CD4-positive, alpha-beta memory T cell (primary cell): ENCODE measurements at regions of chr2 and their contacts with region 1.

Region 1: DNA sequence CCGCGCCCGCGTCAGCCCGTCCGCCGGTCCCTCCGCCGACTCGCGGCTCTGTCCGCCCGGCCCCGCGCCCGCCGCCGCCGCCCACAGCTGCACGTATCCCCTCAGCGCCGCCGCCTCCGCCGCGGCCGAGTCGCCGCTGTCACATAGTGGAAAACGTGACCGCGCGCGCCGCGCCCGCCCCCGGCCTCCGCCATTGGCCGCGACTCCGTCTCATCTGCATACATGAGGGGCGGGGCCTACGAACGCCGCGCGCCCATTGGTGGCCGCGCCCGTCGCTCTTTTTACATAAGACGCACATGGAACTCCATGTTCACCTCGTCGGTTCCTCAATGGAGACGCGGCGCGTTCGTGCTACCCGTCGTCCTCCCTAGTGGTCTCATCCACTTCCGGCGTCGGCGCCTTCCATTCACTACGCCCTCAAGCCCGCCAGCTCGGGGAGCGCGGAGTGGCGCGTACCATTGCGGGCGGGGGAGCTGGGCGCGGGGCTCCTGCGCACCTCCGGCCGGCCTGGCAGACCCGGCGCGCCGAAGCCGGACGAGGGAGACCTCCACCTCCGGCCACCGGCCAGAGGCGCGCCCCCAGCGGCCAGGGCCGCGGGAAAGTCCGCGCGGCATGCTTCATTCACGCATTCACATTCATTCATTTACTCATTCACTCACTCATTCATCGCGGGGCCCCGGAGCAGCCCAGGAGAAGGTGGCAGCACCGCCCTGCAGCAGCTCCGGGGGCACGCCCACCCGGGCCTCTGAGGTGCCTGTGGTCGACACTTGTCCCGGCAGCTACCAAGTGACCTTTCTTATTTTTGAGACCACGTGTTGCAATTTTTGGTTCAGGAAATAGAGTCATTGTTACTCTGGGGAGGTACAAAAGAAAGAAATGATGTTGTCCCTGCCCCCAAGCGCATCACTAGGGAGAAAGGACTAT is 502 bp upstream of the PER2 start:
- DNase-seq: peak; percentile 97 to 99 (median 98)
- H3K4me3 ChIP-seq: peak overlapping the region; percentile 45 to 80
- H3K4me3 Mint-ChIP-seq: peak overlapping the region; percentile 83 to 95 (median 92)
- H3K27ac ChIP-seq: peak overlapping the region; percentile 72
- H3K27ac Mint-ChIP-seq: peak overlapping the region; percentile 92 to 98 (median 97)
- H3K4me1 ChIP-seq: peaks cover 35% of the 10 kb centered on the region
- H3K4me1 Mint-ChIP-seq: peaks cover 17 to 52% (median 36%) of the 10 kb centered on the region in 4 donors
- H3K27me3 ChIP-seq: no peaks in the 10 kb centered on the region
- H3K27me3 Mint-ChIP-seq: no peaks in the 10 kb centered on the region

Region 2: DNA sequence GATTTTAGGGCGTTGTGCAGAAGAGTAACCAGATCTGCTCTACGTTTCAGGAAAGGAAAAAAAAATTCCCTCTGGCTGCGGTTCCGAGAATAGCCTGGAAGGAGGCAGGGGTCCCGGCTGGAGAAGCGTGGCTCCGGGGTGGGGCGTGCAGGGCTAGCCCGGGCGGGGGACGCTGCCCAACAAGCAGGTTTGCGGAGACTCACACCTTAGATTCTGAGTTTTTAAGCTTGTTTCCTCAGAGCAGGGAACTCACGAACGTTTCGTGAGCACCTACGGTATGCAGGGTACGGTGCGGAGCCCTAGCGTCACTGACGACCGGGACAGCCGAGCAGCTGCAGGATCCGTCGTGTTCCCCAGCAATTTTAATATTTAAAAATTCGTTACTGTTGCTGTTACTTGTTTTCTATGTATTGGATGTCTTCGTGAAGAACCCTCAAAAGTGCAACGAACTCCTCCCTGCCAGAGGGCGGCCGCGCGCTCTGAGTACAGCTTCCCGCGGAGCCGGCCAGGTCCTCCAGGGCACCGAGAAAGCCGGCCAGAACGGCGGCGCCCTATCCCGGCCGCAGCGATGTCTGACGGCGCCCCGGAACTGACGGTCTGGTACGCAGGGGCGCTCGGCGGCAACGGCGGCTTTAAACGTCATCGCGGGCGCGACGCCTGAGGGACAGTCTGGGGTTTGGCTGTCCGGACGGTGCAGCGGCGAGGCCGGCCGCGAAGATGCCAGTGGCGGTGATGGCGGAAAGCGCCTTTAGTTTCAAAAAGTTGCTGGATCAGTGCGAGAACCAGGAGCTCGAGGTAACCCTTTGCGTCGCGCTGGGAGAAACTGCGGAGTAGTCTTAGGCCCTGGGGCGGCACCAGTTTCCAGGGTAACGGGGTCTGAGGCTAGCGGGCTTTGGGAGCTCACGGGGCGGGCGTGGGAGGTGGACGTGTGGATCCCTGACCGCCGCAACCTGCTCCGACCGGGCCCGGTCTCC is 1203.4 kb before region 1 on chr2 and contains the start of gene COPS8:
- CTCF ChIA-PET with region 1: no interaction called
- POLR2A ChIA-PET with region 1: no interaction called
- intact Hi-C with region 1: loop called (anchors 2 kb)
- DNase-seq: peak; percentile 88 to 91 (median 91)
- H3K4me3 ChIP-seq: peak within 1 kb of the TSS; percentile 48 to 79
- H3K4me3 Mint-ChIP-seq: peak within 1 kb of the TSS; percentile 99 to 100 (median 99)
- H3K27ac ChIP-seq: peak within 1 kb of the TSS; percentile 81
- H3K27ac Mint-ChIP-seq: peak within 1 kb of the TSS; percentile 97 to 100 (median 100)
- H3K4me1 ChIP-seq: peaks cover 16% of the 10 kb centered on the region
- H3K4me1 Mint-ChIP-seq: peaks cover 9 to 30% (median 16%) of the 10 kb centered on the region in 4 donors
- H3K27me3 ChIP-seq: no peaks in the 10 kb centered on the region
- H3K27me3 Mint-ChIP-seq: peaks cover 0 to 1% of the 10 kb centered on the region in 2 donors
- total RNA-seq, gene COPS8: 33.4 to 34.5 TPM

Region 3: DNA sequence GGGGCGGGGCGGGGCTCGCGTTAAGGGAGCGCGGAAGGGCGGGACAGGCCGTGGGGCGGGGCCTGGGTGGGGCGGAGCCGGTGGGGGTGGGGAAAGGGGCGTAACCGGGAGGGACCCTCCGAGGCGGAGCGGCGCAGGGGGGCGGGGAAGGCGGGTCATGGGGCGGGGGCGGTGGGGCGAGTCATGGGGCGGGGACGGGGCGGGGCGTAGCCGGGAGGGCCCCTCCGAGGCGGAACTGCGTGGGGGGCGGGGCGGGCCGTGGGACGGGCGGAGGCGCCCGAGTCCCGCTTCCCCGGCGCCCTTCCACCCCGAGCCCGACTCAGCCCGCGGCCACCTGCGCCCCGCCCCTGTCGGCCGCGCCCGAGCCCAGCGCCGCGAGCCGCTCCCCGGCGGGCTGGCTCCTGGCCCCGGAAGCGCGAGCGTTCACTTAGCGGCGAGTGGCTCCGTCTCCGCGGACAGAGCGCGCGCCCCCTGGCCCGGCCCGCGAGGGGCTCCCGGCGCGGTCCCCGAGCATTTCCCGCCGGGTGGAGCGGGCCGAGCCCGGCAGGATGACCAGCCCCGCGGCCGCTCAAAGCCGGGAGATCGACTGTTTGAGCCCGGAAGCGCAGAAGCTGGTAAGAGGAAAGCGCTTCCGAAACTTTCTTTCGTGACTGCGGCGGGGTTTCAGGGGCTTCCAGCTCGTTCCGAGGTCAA is 596.9 kb before region 1 on chr2:
- CTCF ChIA-PET with region 1: no interaction called
- POLR2A ChIA-PET with region 1: no interaction called
- intact Hi-C with region 1: loop called (anchors 5 kb)
- DNase-seq: peak; percentile 91 to 94 (median 93)
- H3K4me3 ChIP-seq: peak overlapping the region; percentile 79 to 89
- H3K4me3 Mint-ChIP-seq: peak overlapping the region; percentile 90 to 97 (median 93)
- H3K27ac ChIP-seq: peak overlapping the region; percentile 96
- H3K27ac Mint-ChIP-seq: peak overlapping the region; percentile 93 to 99 (median 97)
- H3K4me1 ChIP-seq: peaks cover 76% of the 10 kb centered on the region
- H3K4me1 Mint-ChIP-seq: peaks cover 55 to 82% (median 69%) of the 10 kb centered on the region in 4 donors
- H3K27me3 ChIP-seq: no peaks in the 10 kb centered on the region
- H3K27me3 Mint-ChIP-seq: no peaks in the 10 kb centered on the region

Region 4: DNA sequence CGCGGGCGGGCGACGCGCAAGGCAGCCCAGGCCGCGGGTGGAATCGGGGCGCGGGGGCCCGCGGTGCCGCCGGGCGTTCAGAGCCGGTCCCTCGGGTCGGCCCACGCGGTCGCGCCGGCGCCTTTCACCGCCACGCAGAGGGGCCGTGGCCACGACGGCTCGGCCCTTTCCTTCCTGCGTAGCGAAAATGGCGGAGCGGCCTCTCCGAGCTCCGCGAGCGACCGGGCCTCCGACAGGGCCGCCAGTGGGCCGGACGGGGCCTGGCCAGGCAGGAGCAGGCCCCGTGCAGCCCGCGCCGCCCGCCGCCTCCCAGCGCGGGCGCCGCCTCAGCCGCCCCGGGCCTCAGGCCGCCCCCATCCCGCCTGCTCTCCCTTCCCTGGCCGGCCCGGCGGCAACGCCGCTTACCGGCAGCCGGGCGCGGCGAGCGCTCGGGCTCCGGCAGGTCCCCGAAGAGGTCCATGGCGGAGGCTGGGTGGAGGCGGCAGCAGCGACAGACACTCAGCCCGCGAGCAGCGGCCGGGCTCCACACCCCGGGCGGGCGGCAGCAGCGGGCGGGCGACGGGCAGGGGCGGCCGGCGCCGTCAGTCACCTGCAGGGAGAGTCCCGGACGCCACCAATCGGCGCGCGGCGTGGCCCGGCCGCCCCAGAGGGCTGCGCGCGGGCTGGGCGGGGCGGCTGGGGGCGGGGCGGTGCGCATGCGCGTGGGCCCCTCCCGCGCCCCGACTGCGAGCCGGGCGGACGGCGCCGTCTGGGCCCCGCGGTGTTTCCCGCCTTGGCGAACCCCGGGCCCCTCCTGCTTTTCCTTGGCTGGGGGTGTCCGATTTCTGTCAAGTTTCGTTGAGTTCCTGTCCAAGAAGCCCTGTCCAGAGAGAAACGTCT is 85.6 kb before region 1 on chr2 and contains the start of gene ILKAP:
- CTCF ChIA-PET with region 1: no interaction called
- POLR2A ChIA-PET with region 1: interaction called, 6 read pairs
- intact Hi-C with region 1: loop called (anchors 1 kb)
- DNase-seq: peak; percentile 88 to 93 (median 91)
- H3K4me3 ChIP-seq: peak within 1 kb of the TSS; percentile 30 to 72
- H3K4me3 Mint-ChIP-seq: peak within 1 kb of the TSS; percentile 87 to 94 (median 91)
- H3K27ac ChIP-seq: peak within 1 kb of the TSS; percentile 79
- H3K27ac Mint-ChIP-seq: peak within 1 kb of the TSS; percentile 89 to 97 (median 94)
- H3K4me1 ChIP-seq: peaks cover 48% of the 10 kb centered on the region
- H3K4me1 Mint-ChIP-seq: peaks cover 28 to 46% (median 36%) of the 10 kb centered on the region in 4 donors
- H3K27me3 ChIP-seq: no peaks in the 10 kb centered on the region
- H3K27me3 Mint-ChIP-seq: no peaks in the 10 kb centered on the region
- total RNA-seq, gene ILKAP: 78.2 to 87.8 TPM

Region 5: GRCh38 chr2:238239872-238240751 is 48.8 kb before region 1 on chr2 and contains the start of gene HES6:
- CTCF ChIA-PET with region 1: no interaction called
- POLR2A ChIA-PET with region 1: no interaction called
- intact Hi-C with region 1: loop called (anchors 2 kb)
- DNase-seq: peak; percentile 68 to 80 (median 74)
- H3K4me3 ChIP-seq: peak within 1 kb of the TSS in 1 of 2 donors; percentile 52
- H3K4me3 Mint-ChIP-seq: peak within 1 kb of the TSS; percentile 87 to 98 (median 91)
- H3K27ac ChIP-seq: no peak within 1 kb of the TSS
- H3K27ac Mint-ChIP-seq: peak within 1 kb of the TSS in 6 of 7 donors; percentile 25 to 91 (median 90)
- H3K4me1 ChIP-seq: peaks cover 12% of the 10 kb centered on the region
- H3K4me1 Mint-ChIP-seq: peaks cover 1 to 32% (median 4%) of the 10 kb centered on the region in 4 donors
- H3K27me3 ChIP-seq: peaks cover 8% of the 10 kb centered on the region
- H3K27me3 Mint-ChIP-seq: peaks cover 14 to 15% of the 10 kb centered on the region in 2 donors
- total RNA-seq, gene HES6: 0.67 to 2.1 TPM

Region 6: DNA sequence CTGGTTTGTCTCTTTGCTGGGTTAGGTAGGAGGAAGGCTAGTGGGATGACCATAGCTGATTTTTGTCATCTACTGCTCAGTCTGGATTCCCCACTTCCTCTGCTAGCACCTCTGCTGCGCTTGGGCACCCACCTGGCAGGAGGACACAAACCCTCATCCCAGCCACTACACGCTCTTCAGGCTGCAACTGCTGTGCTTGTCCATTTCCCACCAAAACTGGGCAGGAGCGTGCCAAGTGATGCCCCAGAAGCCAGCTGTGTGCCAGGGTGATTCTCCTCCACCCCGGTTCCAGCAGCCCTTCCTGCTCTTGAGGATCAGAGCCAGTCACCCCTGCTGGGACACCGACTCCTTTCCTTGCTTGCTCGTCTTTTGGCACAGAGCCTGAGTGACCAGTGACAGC is 15.2 kb after region 1 on chr2:
- CTCF ChIA-PET with region 1: no interaction called
- POLR2A ChIA-PET with region 1: no interaction called
- intact Hi-C with region 1: no loop called
- DNase-seq: no peak
- H3K4me3 ChIP-seq: no peak overlapping the region
- H3K4me3 Mint-ChIP-seq: no peak overlapping the region
- H3K27ac ChIP-seq: no peak overlapping the region
- H3K27ac Mint-ChIP-seq: no peak overlapping the region
- H3K4me1 ChIP-seq: no peaks in the 10 kb centered on the region
- H3K4me1 Mint-ChIP-seq: no peaks in the 10 kb centered on the region
- H3K27me3 ChIP-seq: no peaks in the 10 kb centered on the region
- H3K27me3 Mint-ChIP-seq: peaks cover 3 to 5% of the 10 kb centered on the region in 2 donors

Region 7: GRCh38 chr2:238320246-238320647 is 31.3 kb after region 1 on chr2 and contains the start of gene TRAF3IP1:
- CTCF ChIA-PET with region 1: no interaction called
- POLR2A ChIA-PET with region 1: interaction called, 4 read pairs
- intact Hi-C with region 1: loop called (anchors 1 kb)
- DNase-seq: peak; percentile 84 to 87 (median 86)
- H3K4me3 ChIP-seq: peak within 1 kb of the TSS; percentile 29 to 60
- H3K4me3 Mint-ChIP-seq: peak within 1 kb of the TSS; percentile 79 to 86 (median 82)
- H3K27ac ChIP-seq: no peak within 1 kb of the TSS
- H3K27ac Mint-ChIP-seq: peak within 1 kb of the TSS; percentile 43 to 88 (median 64)
- H3K4me1 ChIP-seq: peaks cover 18% of the 10 kb centered on the region
- H3K4me1 Mint-ChIP-seq: peaks cover 12 to 25% (median 19%) of the 10 kb centered on the region in 4 donors
- H3K27me3 ChIP-seq: no peaks in the 10 kb centered on the region
- H3K27me3 Mint-ChIP-seq: peaks cover 0 to 3% of the 10 kb centered on the region in 2 donors
- total RNA-seq, gene TRAF3IP1: 6.8 to 11.0 TPM

Region 8: DNA sequence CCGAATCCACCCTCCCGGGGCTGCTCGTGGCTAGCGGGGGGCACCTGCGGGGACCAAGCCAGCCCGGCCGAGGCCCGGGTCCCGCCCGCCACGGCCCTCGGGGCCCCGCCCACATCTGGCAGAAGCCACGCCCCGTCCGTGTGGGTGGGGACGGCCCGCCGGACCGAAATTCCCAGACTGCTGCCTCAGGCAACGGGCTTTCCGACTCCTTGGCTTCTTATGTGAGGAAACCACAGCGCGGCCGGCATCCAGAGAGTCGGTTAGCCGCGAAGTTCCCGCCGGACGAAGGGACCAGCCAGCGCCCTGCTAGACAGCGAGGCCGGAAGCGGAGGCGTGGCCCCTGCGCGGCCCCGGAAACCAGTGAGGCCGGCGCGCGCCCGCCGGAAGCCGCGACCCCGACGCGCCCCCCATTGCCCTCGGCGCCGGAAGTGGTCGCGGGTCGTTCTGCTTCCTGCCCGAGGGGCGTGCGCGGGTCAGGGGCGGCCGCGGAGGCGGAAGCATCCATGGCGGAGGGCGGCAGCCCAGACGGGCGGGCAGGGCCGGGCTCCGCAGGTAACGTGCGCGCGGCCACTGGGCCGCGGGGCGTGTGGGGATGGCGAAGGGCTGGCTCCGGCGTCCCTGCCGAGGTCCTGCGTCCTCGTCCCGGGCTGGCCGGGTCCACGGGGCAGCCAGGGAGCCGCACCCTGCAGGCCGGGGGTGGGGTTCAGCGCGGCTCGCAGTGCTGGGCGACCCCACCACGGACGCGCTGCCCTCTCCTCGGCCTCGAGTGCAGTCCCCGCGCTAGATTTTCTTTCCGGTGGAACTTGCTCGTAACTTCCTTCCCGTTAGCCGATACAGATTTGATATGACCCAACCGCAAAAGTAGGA is 137.9 kb after region 1 on chr2 and contains the start of gene ASB1:
- CTCF ChIA-PET with region 1: no interaction called
- POLR2A ChIA-PET with region 1: interaction called, 6 read pairs
- intact Hi-C with region 1: loop called (anchors 1 kb)
- DNase-seq: peak; percentile 70 to 81 (median 75)
- H3K4me3 ChIP-seq: peak within 1 kb of the TSS; percentile 76 to 90
- H3K4me3 Mint-ChIP-seq: peak within 1 kb of the TSS; percentile 91 to 95 (median 93)
- H3K27ac ChIP-seq: peak within 1 kb of the TSS; percentile 65
- H3K27ac Mint-ChIP-seq: peak within 1 kb of the TSS; percentile 91 to 96 (median 94)
- H3K4me1 ChIP-seq: peaks cover 38% of the 10 kb centered on the region
- H3K4me1 Mint-ChIP-seq: peaks cover 31 to 54% (median 44%) of the 10 kb centered on the region in 4 donors
- H3K27me3 ChIP-seq: no peaks in the 10 kb centered on the region
- H3K27me3 Mint-ChIP-seq: no peaks in the 10 kb centered on the region
- total RNA-seq, gene ASB1: 46.5 to 48.4 TPM